Left ventricle myocardium inferior (tissue), 1 donor: ENCODE measurements at regions of chr13 and their contacts with region 1.

Region 1: DNA sequence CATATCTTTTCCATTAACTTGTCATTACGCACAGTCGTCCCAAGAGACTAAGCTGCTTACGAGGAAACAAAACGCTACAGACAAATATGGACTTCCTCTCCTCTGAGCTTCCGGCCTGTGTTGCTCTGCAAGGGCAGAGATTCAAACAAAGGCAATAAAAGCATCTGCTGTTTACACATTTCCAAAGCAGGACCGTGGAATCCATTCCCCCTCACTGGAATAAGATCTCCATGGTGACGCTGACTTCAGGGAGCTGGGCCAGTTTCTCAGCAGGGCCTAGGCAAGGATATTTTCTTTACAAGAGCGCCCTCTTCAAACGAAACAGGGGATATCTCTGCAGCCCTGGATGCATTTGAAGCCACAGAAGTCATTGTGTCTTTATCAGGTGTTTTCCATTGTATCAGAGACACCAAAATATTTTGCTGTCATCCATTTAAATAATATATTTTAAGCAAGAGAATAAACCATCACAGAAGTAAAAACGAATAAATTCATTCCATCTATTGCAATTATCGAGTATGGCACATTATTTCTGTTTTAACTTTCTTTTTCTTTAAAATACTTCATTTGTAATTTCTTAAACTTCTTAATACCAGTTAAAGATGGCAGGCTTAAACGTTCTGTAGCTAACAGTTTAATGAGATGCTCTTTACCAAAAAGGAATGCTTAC is 177.5 kb downstream of the DCLK1 start:
- DNase-seq: peak; percentile 73
- H3K4me3 ChIP-seq: peak overlapping the region; percentile 36
- H3K27ac ChIP-seq: peak overlapping the region; percentile 21
- H3K4me1 ChIP-seq: peaks cover 34% of the 10 kb centered on the region
- H3K27me3 ChIP-seq: no peaks in the 10 kb centered on the region
- CTCF ChIP-seq: peak; percentile 77

Region 2: GRCh38 chr13:35826622-35827254 is 126.9 kb before region 1 on chr13:
- intact Hi-C with region 1: loop called (anchors 10 kb)
- DNase-seq: no peak
- H3K4me3 ChIP-seq: no peak overlapping the region
- H3K27ac ChIP-seq: no peak overlapping the region
- H3K4me1 ChIP-seq: no peaks in the 10 kb centered on the region
- H3K27me3 ChIP-seq: no peaks in the 10 kb centered on the region
- CTCF ChIP-seq: peak; percentile 10

Region 3: DNA sequence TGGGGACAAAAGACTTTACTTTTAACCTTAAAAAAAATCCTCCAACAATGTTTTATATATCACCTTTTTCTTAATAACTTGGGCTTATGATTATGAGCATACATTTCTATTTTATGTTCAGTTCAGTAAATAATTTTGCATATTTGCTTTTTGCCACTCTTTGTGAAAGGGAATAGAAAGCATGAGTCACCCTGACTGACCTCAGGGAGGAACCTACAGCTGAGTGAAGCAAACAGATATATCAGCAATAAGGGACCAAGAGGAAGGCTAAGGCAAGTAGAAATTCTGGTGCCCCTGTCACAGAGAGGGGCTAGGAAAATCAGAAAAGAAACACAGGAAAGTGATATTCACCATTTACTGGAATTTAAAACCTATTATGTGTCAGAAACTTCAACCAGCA is 297.9 kb after region 1 on chr13:
- intact Hi-C with region 1: no loop called
- DNase-seq: no peak
- H3K4me3 ChIP-seq: no peak overlapping the region
- H3K27ac ChIP-seq: no peak overlapping the region
- H3K4me1 ChIP-seq: no peaks in the 10 kb centered on the region
- H3K27me3 ChIP-seq: no peaks in the 10 kb centered on the region
- CTCF ChIP-seq: no peak